Panc1 (cell line): ENCODE measurements at regions of chr17 and their contacts with region 1.

Region 1: GRCh38 chr17:48878918-48879898 is 13.4 kb upstream of the ATP5MC1 start:
- DNase-seq: peak; percentile 73
- ATAC-seq: peak; percentile 90
- H3K4me3 ChIP-seq: no peak overlapping the region
- H3K27ac ChIP-seq: no peak overlapping the region
- H3K4me1 ChIP-seq: no peaks in the 10 kb centered on the region
- H3K27me3 ChIP-seq: no peaks in the 10 kb centered on the region
- CTCF ChIP-seq: peak; percentile 99

Region 2: GRCh38 chr17:48678141-48678971 is 200.9 kb before region 1 on chr17:
- CTCF ChIA-PET with region 1: interaction called, 48 read pairs
- POLR2A ChIA-PET with region 1: no interaction called
- in situ Hi-C with region 1: no loop called
- intact Hi-C with region 1: loop called (anchors 2 kb)
- DNase-seq: no peak
- ATAC-seq: peak; percentile 95
- H3K4me3 ChIP-seq: peak overlapping the region; percentile 11 to 42
- H3K27ac ChIP-seq: no peak overlapping the region
- H3K4me1 ChIP-seq: no peaks in the 10 kb centered on the region; the same call in 1 of the 2 replicates
- H3K27me3 ChIP-seq: no peaks in the 10 kb centered on the region
- CTCF ChIP-seq: peak; percentile 100

Region 3: GRCh38 chr17:48751172-48751571 is 128.0 kb before region 1 on chr17:
- CTCF ChIA-PET with region 1: interaction called, 17 read pairs
- POLR2A ChIA-PET with region 1: no interaction called
- in situ Hi-C with region 1: no loop called
- intact Hi-C with region 1: no loop called
- DNase-seq: no peak
- ATAC-seq: peak; percentile 63
- H3K4me3 ChIP-seq: no peak overlapping the region
- H3K27ac ChIP-seq: no peak overlapping the region
- H3K4me1 ChIP-seq: peaks cover 14% of the 10 kb centered on the region
- H3K27me3 ChIP-seq: peaks cover 4% of the 10 kb centered on the region; the same call in 1 of the 2 replicates
- CTCF ChIP-seq: no peak

Region 4: GRCh38 chr17:48804925-48805411 is 74.2 kb before region 1 on chr17:
- CTCF ChIA-PET with region 1: interaction called, 60 read pairs
- POLR2A ChIA-PET with region 1: no interaction called
- in situ Hi-C with region 1: loop called (anchors 10 kb)
- intact Hi-C with region 1: loop called (anchors 1 kb)
- DNase-seq: no peak
- ATAC-seq: peak; percentile 97
- H3K4me3 ChIP-seq: no peak overlapping the region
- H3K27ac ChIP-seq: no peak overlapping the region
- H3K4me1 ChIP-seq: peaks cover 3% of the 10 kb centered on the region; the same call in 1 of the 2 replicates
- H3K27me3 ChIP-seq: no peaks in the 10 kb centered on the region; the same call in 1 of the 2 replicates
- CTCF ChIP-seq: peak; percentile 99

Region 5: GRCh38 chr17:48825446-48826381 is 53.5 kb before region 1 on chr17:
- CTCF ChIA-PET with region 1: interaction called, 14 read pairs
- POLR2A ChIA-PET with region 1: interaction called, 3 read pairs
- in situ Hi-C with region 1: no loop called
- intact Hi-C with region 1: no loop called
- DNase-seq: no peak
- ATAC-seq: no peak
- H3K4me3 ChIP-seq: no peak overlapping the region
- H3K27ac ChIP-seq: no peak overlapping the region
- H3K4me1 ChIP-seq: no peaks in the 10 kb centered on the region
- H3K27me3 ChIP-seq: no peaks in the 10 kb centered on the region
- CTCF ChIP-seq: no peak

Region 6: GRCh38 chr17:48841395-48841831 is 37.8 kb before region 1 on chr17:
- CTCF ChIA-PET with region 1: interaction called, 13 read pairs
- POLR2A ChIA-PET with region 1: interaction called, 11 read pairs
- in situ Hi-C with region 1: no loop called
- intact Hi-C with region 1: no loop called
- DNase-seq: no peak
- ATAC-seq: no peak
- H3K4me3 ChIP-seq: no peak overlapping the region
- H3K27ac ChIP-seq: peak overlapping the region; percentile 49
- H3K4me1 ChIP-seq: peaks cover 12% of the 10 kb centered on the region
- H3K27me3 ChIP-seq: no peaks in the 10 kb centered on the region
- CTCF ChIP-seq: no peak

Region 7: GRCh38 chr17:49031965-49032928 is 153.0 kb after region 1 on chr17:
- CTCF ChIA-PET with region 1: interaction called, 19 read pairs
- POLR2A ChIA-PET with region 1: no interaction called
- in situ Hi-C with region 1: no loop called
- intact Hi-C with region 1: no loop called
- DNase-seq: peak; percentile 64
- ATAC-seq: peak; percentile 92
- H3K4me3 ChIP-seq: 0 out of 4 replicates have a peak overlapping the region, but pooled peaks of 1 of the 2 experiments have one; percentile 15
- H3K27ac ChIP-seq: no peak overlapping the region
- H3K4me1 ChIP-seq: no peaks in the 10 kb centered on the region
- H3K27me3 ChIP-seq: no peaks in the 10 kb centered on the region
- CTCF ChIP-seq: peak; percentile 98